Lower leg skin (tissue), 4 donors: ENCODE measurements at regions of chrX and their contacts with region 1.

Region 1: DNA sequence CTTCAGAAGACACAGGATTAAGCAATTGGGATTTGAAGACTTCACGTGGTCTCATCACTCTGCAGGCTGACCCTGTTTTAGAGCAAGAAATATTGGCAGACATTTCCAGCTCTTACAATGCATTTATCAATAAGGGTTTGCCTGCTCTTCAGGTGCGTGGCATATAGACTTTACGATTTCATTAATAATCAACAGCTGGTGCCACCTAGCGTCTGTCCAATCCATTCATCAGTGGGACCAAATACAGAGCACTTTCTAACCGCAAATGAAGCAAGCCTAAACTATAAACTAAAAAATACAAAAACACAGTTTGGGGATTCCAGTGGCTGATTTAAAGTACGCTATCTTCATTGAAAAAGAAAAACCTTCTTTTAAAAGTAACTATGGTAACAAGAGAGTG is 125.4 kb upstream of the DMD start:
- DNase-seq: no peak
- H3K4me3 ChIP-seq: no peak overlapping the region
- CTCF ChIP-seq: no peak
- POLR2A ChIP-seq: no peak

Region 2: GRCh38 chrX:32530802-32531403 is 805.9 kb before region 1 on chrX:
- intact Hi-C with region 1: loop called (anchors 10 kb)
- DNase-seq: no peak
- H3K4me3 ChIP-seq: no peak overlapping the region
- CTCF ChIP-seq: no peak
- POLR2A ChIP-seq: no peak

Region 3: DNA sequence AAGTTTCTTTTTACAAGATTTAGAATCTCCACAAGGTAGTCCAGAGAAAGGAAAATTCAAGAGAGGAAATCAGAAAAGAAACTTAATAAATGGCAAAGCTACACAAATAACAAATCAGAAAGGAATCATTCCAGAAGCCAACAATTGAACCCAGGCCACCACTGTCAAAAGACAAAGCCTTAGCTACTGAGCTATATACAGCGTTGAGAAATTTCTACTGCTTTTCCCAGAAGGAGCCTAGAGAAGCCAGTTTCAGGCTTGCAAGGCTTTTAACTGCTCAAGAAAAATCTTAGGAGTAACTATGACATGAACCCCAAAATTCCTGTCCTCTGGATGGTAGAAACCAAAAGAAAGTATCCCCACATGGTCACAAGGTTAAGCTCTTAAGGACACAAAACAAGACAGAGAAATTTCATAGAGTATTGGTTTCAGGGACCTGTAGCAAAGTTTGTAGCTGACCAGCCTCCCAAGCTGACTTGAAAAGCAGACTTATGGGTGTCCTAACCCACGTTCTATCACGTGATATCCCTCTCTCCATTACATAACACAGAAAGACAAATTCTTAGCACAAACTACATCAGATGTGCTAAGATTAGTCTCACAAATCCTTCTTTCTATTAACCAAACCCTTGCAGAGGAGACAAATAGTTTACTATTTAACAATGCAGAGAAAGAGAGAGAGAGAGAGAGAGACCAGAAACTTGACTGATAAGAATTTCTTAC is 254.3 kb before region 1 on chrX:
- intact Hi-C with region 1: no loop called
- DNase-seq: no peak
- H3K4me3 ChIP-seq: no peak overlapping the region
- CTCF ChIP-seq: no peak
- POLR2A ChIP-seq: no peak

Region 4: GRCh38 chrX:33095079-33095478 is 241.7 kb before region 1 on chrX:
- intact Hi-C with region 1: no loop called
- DNase-seq: no peak
- H3K4me3 ChIP-seq: no peak overlapping the region
- CTCF ChIP-seq: no peak
- POLR2A ChIP-seq: no peak

Region 5: DNA sequence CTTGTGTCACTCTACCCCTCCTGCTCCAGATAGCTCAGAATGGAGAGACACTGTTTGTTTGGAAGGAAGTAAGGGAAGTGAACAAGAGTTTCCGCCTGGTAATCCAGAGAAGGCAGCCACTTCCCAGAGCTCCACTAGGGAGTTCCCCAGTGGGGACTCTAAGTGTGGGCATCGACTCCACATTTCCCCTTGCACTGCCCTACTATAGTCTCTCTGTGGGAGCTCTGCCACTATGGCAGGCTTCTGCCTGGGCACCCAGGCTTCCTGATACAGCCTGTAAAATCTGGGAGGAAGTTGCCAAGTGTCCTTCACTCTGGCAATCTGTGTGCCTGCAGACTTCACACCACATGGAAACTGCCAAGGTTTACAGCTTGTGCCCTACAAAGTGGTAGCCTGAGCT is 120.3 kb after region 1 on chrX:
- intact Hi-C with region 1: no loop called
- DNase-seq: no peak
- H3K4me3 ChIP-seq: no peak overlapping the region
- CTCF ChIP-seq: no peak
- POLR2A ChIP-seq: no peak